ENCODE measurements at regions of chr3 and their contacts with region 1.

Region 1: DNA sequence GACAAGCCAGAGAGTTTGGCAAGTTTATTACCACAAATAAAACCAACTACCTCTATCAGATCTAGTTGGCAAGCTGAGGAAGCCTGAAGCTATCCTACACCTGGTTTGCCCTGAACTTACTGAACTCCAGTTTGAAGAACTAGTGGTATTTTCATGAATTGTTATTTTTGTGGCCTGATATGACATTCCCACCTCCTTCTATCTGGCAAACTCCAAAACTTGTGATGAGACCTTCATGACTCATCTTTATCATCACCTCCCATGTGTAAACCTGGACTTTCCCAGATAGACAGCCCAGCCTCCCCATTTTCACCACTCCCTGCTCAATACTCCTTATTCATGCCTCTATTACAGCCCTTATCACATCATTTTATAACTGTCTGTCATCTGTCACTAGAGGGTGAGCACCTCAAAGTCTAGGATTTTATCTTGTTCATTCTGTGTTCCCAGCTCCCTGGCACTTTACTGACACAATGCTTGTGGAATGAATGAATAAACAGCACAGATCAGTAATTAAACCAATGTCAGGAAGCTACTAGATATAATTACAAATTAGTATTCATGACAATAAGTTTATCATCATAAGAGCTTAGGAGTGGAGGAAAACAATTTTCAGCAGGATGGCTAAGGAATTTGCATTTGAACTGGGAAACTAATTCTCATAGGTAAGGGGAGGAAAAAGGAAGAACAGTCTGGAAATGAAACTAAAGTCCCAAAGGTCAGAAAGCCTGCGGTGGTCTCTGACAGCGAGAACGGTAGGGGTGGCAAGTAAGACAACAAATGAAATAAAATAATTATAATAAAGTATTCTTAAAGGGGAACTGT is 13.2 kb upstream of the TRANK1 start:
- DNase-seq: no peak
- H3K4me3 ChIP-seq: no peak overlapping the region
- H3K27ac ChIP-seq: no peak overlapping the region
- H3K4me1 ChIP-seq: peaks cover 0 to 10% (median 2%) of the 10 kb centered on the region in 4 donors
- H3K27me3 ChIP-seq: no peaks in the 10 kb centered on the region
- CTCF ChIP-seq: no peak
- EP300 ChIP-seq: no peak
- POLR2A ChIP-seq: no peak

Region 2: GRCh38 chr3:36393563-36393962 is 564.5 kb before region 1 on chr3:
- intact Hi-C with region 1: no loop called
- DNase-seq: no peak
- H3K4me3 ChIP-seq: no peak overlapping the region
- H3K27ac ChIP-seq: no peak overlapping the region
- H3K4me1 ChIP-seq: no peaks in the 10 kb centered on the region
- H3K27me3 ChIP-seq: no peaks in the 10 kb centered on the region
- CTCF ChIP-seq: no peak
- EP300 ChIP-seq: no peak
- POLR2A ChIP-seq: no peak

Region 3: DNA sequence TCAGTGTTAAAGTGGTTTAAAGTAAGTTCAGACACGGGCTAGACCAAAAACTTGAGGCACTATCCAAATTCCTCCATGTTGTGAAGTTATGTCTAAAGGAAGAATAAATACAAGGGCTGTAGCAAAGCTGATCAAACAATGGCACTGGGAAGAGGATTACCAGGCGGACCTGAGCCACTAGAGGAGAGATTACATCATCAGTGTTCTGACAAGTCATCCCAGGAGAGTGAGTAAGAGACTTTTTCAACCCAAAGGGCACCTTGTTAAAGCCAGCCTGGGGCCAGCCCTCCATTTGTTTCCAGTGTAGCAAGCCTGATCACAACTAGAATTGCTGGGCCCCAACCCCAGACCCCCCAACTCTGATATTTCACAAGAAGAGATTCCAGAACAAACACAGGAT is 360.7 kb before region 1 on chr3:
- intact Hi-C with region 1: no loop called
- DNase-seq: no peak
- H3K4me3 ChIP-seq: no peak overlapping the region
- H3K27ac ChIP-seq: no peak overlapping the region
- H3K4me1 ChIP-seq: no peaks in the 10 kb centered on the region
- H3K27me3 ChIP-seq: no peaks in the 10 kb centered on the region
- CTCF ChIP-seq: no peak
- EP300 ChIP-seq: no peak
- POLR2A ChIP-seq: no peak

Region 4: DNA sequence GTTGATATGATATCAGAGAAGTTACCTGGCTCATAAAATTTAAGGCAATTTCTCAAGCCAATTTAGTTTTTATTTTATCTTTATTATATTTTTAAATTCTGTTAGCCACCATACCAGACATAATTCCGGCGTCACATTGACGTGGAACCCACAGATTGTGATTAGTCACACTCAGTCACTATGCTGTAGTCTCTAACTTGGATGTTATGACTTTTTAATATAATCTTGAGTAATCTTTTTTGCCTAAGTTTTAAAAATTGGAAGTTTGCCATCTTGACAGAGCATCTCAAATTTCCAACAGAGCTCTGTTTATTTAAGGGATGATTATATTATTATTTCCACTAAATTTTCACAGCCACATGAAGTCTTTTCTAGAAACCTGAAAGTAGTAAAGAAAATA is 184.0 kb before region 1 on chr3:
- intact Hi-C with region 1: no loop called
- DNase-seq: peak in 1 of 2 donors; percentile 18
- H3K4me3 ChIP-seq: no peak overlapping the region
- H3K27ac ChIP-seq: no peak overlapping the region
- H3K4me1 ChIP-seq: peaks cover 0 to 5% (median 0%) of the 10 kb centered on the region in 4 donors
- H3K27me3 ChIP-seq: peaks cover 0 to 6% (median 0%) of the 10 kb centered on the region in 3 donors
- CTCF ChIP-seq: no peak
- EP300 ChIP-seq: no peak
- POLR2A ChIP-seq: no peak

Region 5: GRCh38 chr3:36907911-36908646 is 50.0 kb before region 1 on chr3:
- intact Hi-C with region 1: loop called (anchors 10 kb)
- DNase-seq: peak; percentile 66 to 76
- H3K4me3 ChIP-seq: peak overlapping the region; percentile 45 to 52 (median 50)
- H3K27ac ChIP-seq: peak overlapping the region; percentile 74 to 93 (median 84)
- H3K4me1 ChIP-seq: peaks cover 22 to 67% (median 37%) of the 10 kb centered on the region in 4 donors
- H3K27me3 ChIP-seq: no peaks in the 10 kb centered on the region
- CTCF ChIP-seq: no peak
- EP300 ChIP-seq: no peak
- POLR2A ChIP-seq: no peak